Naive thymus-derived CD4-positive, alpha-beta T cell (primary cell): ENCODE measurements at regions of chr4 and their contacts with region 1.

Region 1: GRCh38 chr4:76748649-76749048 is 149.3 kb downstream of the SOWAHB start:
- DNase-seq: peak in 5 of 9 donors; percentile 5 to 23 (median 11)
- ATAC-seq: no peak
- H3K4me3 ChIP-seq: no peak overlapping the region
- H3K4me3 Mint-ChIP-seq: no peak overlapping the region
- H3K27ac ChIP-seq: no peak overlapping the region
- H3K27ac Mint-ChIP-seq: no peak overlapping the region
- H3K4me1 ChIP-seq: no peaks in the 10 kb centered on the region
- H3K4me1 Mint-ChIP-seq: peaks cover 0 to 4% (median 3%) of the 10 kb centered on the region in 7 donors
- H3K27me3 ChIP-seq: no peaks in the 10 kb centered on the region
- H3K27me3 Mint-ChIP-seq: peaks cover 26 to 36% (median 29%) of the 10 kb centered on the region in 5 donors

Region 2: GRCh38 chr4:76430519-76431388 is 317.9 kb before region 1 on chr4:
- CTCF ChIA-PET with region 1: no interaction called
- POLR2A ChIA-PET with region 1: no interaction called
- intact Hi-C with region 1: loop called in 1 of 2 experiments (anchors 2 kb)
- DNase-seq: peak in 3 of 9 donors; percentile 17 to 32 (median 18)
- ATAC-seq: no peak
- H3K4me3 ChIP-seq: no peak overlapping the region
- H3K4me3 Mint-ChIP-seq: no peak overlapping the region
- H3K27ac ChIP-seq: no peak overlapping the region
- H3K27ac Mint-ChIP-seq: no peak overlapping the region
- H3K4me1 ChIP-seq: no peaks in the 10 kb centered on the region
- H3K4me1 Mint-ChIP-seq: peaks cover 0 to 4% (median 0%) of the 10 kb centered on the region in 7 donors
- H3K27me3 ChIP-seq: no peaks in the 10 kb centered on the region
- H3K27me3 Mint-ChIP-seq: peaks cover 20 to 37% (median 22%) of the 10 kb centered on the region in 5 donors

Region 3: GRCh38 chr4:76738086-76738931 is 10.3 kb before region 1 on chr4:
- CTCF ChIA-PET with region 1: no interaction called
- POLR2A ChIA-PET with region 1: no interaction called
- intact Hi-C with region 1: no loop called
- DNase-seq: no peak
- ATAC-seq: no peak
- H3K4me3 ChIP-seq: no peak overlapping the region
- H3K4me3 Mint-ChIP-seq: no peak overlapping the region
- H3K27ac ChIP-seq: no peak overlapping the region
- H3K27ac Mint-ChIP-seq: no peak overlapping the region
- H3K4me1 ChIP-seq: no peaks in the 10 kb centered on the region
- H3K4me1 Mint-ChIP-seq: peaks cover 0 to 6% (median 0%) of the 10 kb centered on the region in 7 donors
- H3K27me3 ChIP-seq: no peaks in the 10 kb centered on the region
- H3K27me3 Mint-ChIP-seq: peaks cover 0 to 15% (median 6%) of the 10 kb centered on the region in 5 donors